CD4-positive, alpha-beta memory T cell (primary cell): ENCODE measurements at regions of chr22 and their contacts with region 1.

Region 1: GRCh38 chr22:20568989-20569769 is 61.8 kb downstream of the MED15 start:
- DNase-seq: peak; percentile 91 to 94 (median 93)
- H3K4me3 ChIP-seq: peak overlapping the region; percentile 14 to 47
- H3K4me3 Mint-ChIP-seq: peak overlapping the region; percentile 79 to 95 (median 89)
- H3K27ac ChIP-seq: peak overlapping the region; percentile 54
- H3K27ac Mint-ChIP-seq: peak overlapping the region; percentile 97 to 99 (median 99)
- H3K4me1 ChIP-seq: peaks cover 85% of the 10 kb centered on the region
- H3K4me1 Mint-ChIP-seq: peaks cover 56 to 95% (median 78%) of the 10 kb centered on the region in 4 donors
- H3K27me3 ChIP-seq: no peaks in the 10 kb centered on the region
- H3K27me3 Mint-ChIP-seq: no peaks in the 10 kb centered on the region

Region 2: GRCh38 chr22:20507253-20508066 is 61.7 kb before region 1 on chr22 and contains the start of gene MED15:
- CTCF ChIA-PET with region 1: interaction called, 154 read pairs
- POLR2A ChIA-PET with region 1: interaction called, 100 read pairs
- intact Hi-C with region 1: loop called (anchors 1 kb)
- DNase-seq: peak; percentile 82 to 90 (median 84)
- H3K4me3 ChIP-seq: peak within 1 kb of the TSS; percentile 85 to 98
- H3K4me3 Mint-ChIP-seq: peak within 1 kb of the TSS; percentile 93 to 99 (median 97)
- H3K27ac ChIP-seq: peak within 1 kb of the TSS; percentile 93
- H3K27ac Mint-ChIP-seq: peak within 1 kb of the TSS; percentile 86 to 99 (median 96)
- H3K4me1 ChIP-seq: peaks cover 50% of the 10 kb centered on the region
- H3K4me1 Mint-ChIP-seq: peaks cover 42 to 57% (median 50%) of the 10 kb centered on the region in 4 donors
- H3K27me3 ChIP-seq: no peaks in the 10 kb centered on the region
- H3K27me3 Mint-ChIP-seq: no peaks in the 10 kb centered on the region
- total RNA-seq, gene MED15: 225 to 237 TPM

Region 3: GRCh38 chr22:20531315-20532201 is 37.6 kb before region 1 on chr22:
- CTCF ChIA-PET with region 1: interaction called, 12 read pairs
- POLR2A ChIA-PET with region 1: interaction called, 14 read pairs
- intact Hi-C with region 1: no loop called
- DNase-seq: no peak
- H3K4me3 ChIP-seq: no peak overlapping the region
- H3K4me3 Mint-ChIP-seq: peak overlapping the region in 4 of 8 donors; percentile 23 to 78 (median 38)
- H3K27ac ChIP-seq: peak overlapping the region; percentile 23
- H3K27ac Mint-ChIP-seq: peak overlapping the region in 6 of 7 donors; percentile 41 to 90 (median 82)
- H3K4me1 ChIP-seq: peaks cover 65% of the 10 kb centered on the region
- H3K4me1 Mint-ChIP-seq: peaks cover 51 to 82% (median 59%) of the 10 kb centered on the region in 4 donors
- H3K27me3 ChIP-seq: no peaks in the 10 kb centered on the region
- H3K27me3 Mint-ChIP-seq: no peaks in the 10 kb centered on the region

Region 4: GRCh38 chr22:20583471-20583922 is 14.3 kb after region 1 on chr22:
- CTCF ChIA-PET with region 1: interaction called, 13 read pairs
- POLR2A ChIA-PET with region 1: interaction called, 49 read pairs
- intact Hi-C with region 1: loop called (anchors 2 kb)
- DNase-seq: no peak
- H3K4me3 ChIP-seq: no peak overlapping the region
- H3K4me3 Mint-ChIP-seq: no peak overlapping the region
- H3K27ac ChIP-seq: no peak overlapping the region
- H3K27ac Mint-ChIP-seq: no peak overlapping the region
- H3K4me1 ChIP-seq: peaks cover 11% of the 10 kb centered on the region
- H3K4me1 Mint-ChIP-seq: peaks cover 5 to 36% (median 11%) of the 10 kb centered on the region in 4 donors
- H3K27me3 ChIP-seq: no peaks in the 10 kb centered on the region
- H3K27me3 Mint-ChIP-seq: no peaks in the 10 kb centered on the region

Region 5: GRCh38 chr22:20606041-20606783 is 37.0 kb after region 1 on chr22:
- CTCF ChIA-PET with region 1: interaction called, 77 read pairs
- POLR2A ChIA-PET with region 1: interaction called, 13 read pairs
- intact Hi-C with region 1: no loop called
- DNase-seq: peak; percentile 64 to 73 (median 71)
- H3K4me3 ChIP-seq: no peak overlapping the region
- H3K4me3 Mint-ChIP-seq: peak overlapping the region in 2 of 8 donors; percentile 9 to 17
- H3K27ac ChIP-seq: no peak overlapping the region
- H3K27ac Mint-ChIP-seq: peak overlapping the region in 3 of 7 donors; percentile 23 to 80 (median 53)
- H3K4me1 ChIP-seq: peaks cover 5% of the 10 kb centered on the region
- H3K4me1 Mint-ChIP-seq: peaks cover 4 to 11% (median 9%) of the 10 kb centered on the region in 4 donors
- H3K27me3 ChIP-seq: no peaks in the 10 kb centered on the region
- H3K27me3 Mint-ChIP-seq: peaks cover 0 to 2% of the 10 kb centered on the region in 2 donors